Mammary epithelial cell (primary cell): ENCODE measurements at regions of chr2 and their contacts with region 1.

Region 1: GRCh38 chr2:43184339-43184895 is 42.0 kb downstream of the ZFP36L2 start:
- DNase-seq: peak; percentile 95
- H3K4me3 ChIP-seq: no peak overlapping the region
- H3K27ac ChIP-seq: peak overlapping the region; percentile 47
- H3K4me1 ChIP-seq: peaks cover 17% of the 10 kb centered on the region
- H3K27me3 ChIP-seq: no peaks in the 10 kb centered on the region
- CTCF ChIP-seq: no peak

Region 2: DNA sequence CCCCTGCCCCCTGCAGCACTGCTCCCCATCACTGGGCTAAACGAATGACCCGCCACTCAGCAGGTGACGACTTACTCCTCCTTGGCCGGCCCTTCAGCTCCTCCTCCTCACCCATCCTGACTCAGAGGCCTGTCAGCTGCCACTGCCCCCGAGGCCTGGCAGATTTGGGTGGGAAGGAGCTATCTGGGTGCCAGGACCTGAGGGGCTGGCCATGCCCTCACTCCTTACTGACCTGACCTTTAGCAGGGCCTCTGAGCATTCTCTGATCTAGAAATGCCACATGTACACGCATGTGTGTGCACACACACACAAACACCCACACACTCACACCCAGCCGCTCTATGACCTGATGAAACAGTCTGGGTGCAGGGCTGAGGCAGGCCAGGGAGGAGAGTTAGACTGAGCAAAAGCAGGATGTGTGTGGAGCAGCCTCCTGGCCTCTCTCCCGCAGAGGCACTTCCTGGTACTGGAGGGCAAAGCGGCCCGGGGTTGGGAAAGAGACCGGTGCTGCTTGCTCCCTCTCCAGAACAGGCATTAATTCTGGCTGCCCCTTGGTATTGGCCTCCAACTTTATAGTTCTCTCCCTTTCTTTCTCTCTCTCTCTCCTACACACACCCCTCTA is 26.0 kb before region 1 on chr2:
- CTCF ChIA-PET with region 1: no interaction called
- dilution Hi-C with region 1: no loop called
- in situ Hi-C with region 1: no loop called
- intact Hi-C with region 1: loop called (anchors 2 kb)
- DNase-seq: peak; percentile 94
- H3K4me3 ChIP-seq: no peak overlapping the region
- H3K27ac ChIP-seq: peak overlapping the region; percentile 93
- H3K4me1 ChIP-seq: peaks cover 52% of the 10 kb centered on the region
- H3K27me3 ChIP-seq: no peaks in the 10 kb centered on the region
- CTCF ChIP-seq: no peak